CD8-positive, alpha-beta memory T cell (primary cell): ENCODE measurements at regions of chr7 and their contacts with region 1.

Region 1: GRCh38 chr7:23597094-23598091 is at the start of gene CCDC126:
- DNase-seq: peak; percentile 73 to 85 (median 78)
- H3K4me3 ChIP-seq: peak within 1 kb of the TSS; percentile 81
- H3K4me3 Mint-ChIP-seq: peak within 1 kb of the TSS; percentile 92 to 98 (median 92)
- H3K27ac ChIP-seq: peak within 1 kb of the TSS; percentile 55
- H3K27ac Mint-ChIP-seq: peak within 1 kb of the TSS; percentile 17 to 89 (median 84)
- H3K4me1 ChIP-seq: peaks cover 22% of the 10 kb centered on the region
- H3K4me1 Mint-ChIP-seq: peaks cover 29 to 49% (median 44%) of the 10 kb centered on the region in 3 donors
- H3K27me3 ChIP-seq: no peaks in the 10 kb centered on the region
- H3K27me3 Mint-ChIP-seq: peaks cover 2 to 3% of the 10 kb centered on the region in 2 donors
- total RNA-seq, gene CCDC126: 5.9 to 7.2 TPM

Region 2: DNA sequence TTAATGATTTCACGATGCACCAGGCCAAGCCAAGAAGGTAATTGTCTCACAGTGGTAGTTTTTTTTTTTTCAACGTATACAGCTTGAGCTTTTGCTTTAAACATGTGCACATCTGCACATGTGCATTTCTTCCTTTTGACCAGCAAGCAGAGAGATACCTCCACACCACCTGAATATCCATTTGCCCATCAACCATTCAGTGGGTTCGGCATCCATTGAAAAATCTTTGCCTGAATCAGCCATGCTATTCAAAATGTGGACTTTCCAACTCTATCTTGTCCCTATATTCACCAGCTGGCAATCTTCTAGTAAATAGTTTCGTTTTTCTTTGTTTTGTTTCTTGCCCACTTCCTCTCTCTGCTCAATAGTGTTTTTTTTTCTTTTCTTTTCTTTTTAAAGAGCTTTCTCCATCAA is 57.9 kb before region 1 on chr7:
- CTCF ChIA-PET with region 1: interaction called, 3 read pairs
- POLR2A ChIA-PET with region 1: interaction called, 11 read pairs
- DNase-seq: peak in 2 of 5 donors; percentile 26 to 30
- H3K4me3 ChIP-seq: peak overlapping the region; percentile 37
- H3K4me3 Mint-ChIP-seq: peak overlapping the region; percentile 51 to 78 (median 68)
- H3K27ac ChIP-seq: peak overlapping the region; percentile 5
- H3K27ac Mint-ChIP-seq: peak overlapping the region; percentile 43 to 92 (median 84)
- H3K4me1 ChIP-seq: peaks cover 17% of the 10 kb centered on the region
- H3K4me1 Mint-ChIP-seq: peaks cover 14 to 17% (median 15%) of the 10 kb centered on the region in 3 donors
- H3K27me3 ChIP-seq: no peaks in the 10 kb centered on the region
- H3K27me3 Mint-ChIP-seq: no peaks in the 10 kb centered on the region

Region 3: DNA sequence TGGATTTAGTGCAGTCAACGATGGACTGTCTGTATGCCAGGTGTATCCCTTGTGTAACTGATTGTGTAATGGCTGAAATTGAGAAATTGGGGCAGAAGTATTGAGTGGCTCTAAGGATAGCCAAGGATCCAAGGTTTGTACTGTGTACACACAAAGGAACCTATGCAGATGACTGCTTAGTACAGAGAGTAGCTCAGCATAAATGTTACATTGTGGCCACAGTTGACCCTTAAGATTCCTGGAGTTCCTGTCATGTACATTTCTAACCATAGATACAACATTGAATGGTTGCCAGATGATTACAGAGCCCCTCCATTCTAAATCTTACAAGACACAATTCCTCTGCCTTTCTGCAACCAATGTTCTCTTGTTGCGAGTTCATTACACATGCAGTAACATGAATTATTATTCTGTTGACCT is 25.1 kb after region 1 on chr7:
- CTCF ChIA-PET with region 1: no interaction called
- POLR2A ChIA-PET with region 1: no interaction called
- DNase-seq: no peak
- H3K4me3 ChIP-seq: no peak overlapping the region
- H3K4me3 Mint-ChIP-seq: no peak overlapping the region
- H3K27ac ChIP-seq: no peak overlapping the region
- H3K27ac Mint-ChIP-seq: no peak overlapping the region
- H3K4me1 ChIP-seq: no peaks in the 10 kb centered on the region
- H3K4me1 Mint-ChIP-seq: peaks cover 4 to 23% (median 12%) of the 10 kb centered on the region in 3 donors
- H3K27me3 ChIP-seq: no peaks in the 10 kb centered on the region
- H3K27me3 Mint-ChIP-seq: no peaks in the 10 kb centered on the region